ENCODE measurements at regions of chr16 and their contacts with region 1.

Region 1: DNA sequence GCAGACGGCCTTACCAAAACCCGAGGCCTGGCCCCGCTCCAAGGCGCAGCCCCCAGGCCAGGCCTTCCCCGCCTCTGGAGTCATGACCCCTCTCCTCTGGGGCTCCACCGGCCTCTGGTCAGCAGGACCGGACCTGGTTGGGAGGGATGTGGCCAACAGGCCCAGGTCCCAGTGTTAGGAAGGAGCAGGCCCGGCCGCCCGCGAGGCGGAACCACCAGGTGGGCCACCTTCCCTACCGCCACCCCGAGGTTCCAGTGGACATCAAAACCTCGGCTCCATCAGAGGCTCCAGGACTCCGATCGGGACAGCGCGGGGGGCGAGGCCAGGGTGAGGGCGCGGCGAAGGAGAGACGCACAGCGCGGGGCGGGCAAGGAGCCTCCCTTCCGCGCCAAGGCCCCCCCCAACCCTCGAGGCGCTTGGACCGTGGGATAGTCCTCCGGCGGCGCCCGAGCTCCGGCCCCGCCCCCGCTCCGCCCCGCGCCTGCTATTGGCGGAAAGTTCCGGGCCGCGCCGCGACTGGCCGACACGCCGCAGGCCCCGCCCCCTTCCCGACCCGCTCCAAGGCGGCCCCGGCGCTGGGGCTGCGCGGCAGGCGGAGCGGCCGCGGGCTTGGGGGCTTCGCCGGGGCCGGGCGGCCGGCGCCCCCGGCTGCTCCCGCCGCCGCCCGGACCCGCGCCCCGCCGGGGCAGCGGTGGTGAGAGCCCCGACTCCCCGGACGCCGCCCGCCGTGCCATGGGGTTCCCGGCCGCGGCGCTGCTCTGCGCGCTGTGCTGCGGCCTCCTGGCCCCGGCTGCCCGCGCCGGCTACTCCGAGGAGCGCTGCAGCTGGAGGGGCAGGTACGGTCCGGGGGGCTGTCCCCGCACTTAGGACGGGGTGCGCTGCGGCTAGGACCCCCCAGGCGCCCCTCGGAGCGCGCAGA is at the start of gene METRN:
- DNase-seq: peak; percentile 95
- ATAC-seq: peak; percentile 85
- H3K4me3 Mint-ChIP-seq: peak within 1 kb of the TSS; percentile 56
- H3K27ac Mint-ChIP-seq: no peak within 1 kb of the TSS
- H3K4me1 Mint-ChIP-seq: peaks cover 8% of the 10 kb centered on the region
- H3K27me3 Mint-ChIP-seq: peaks cover 14% of the 10 kb centered on the region
- total RNA-seq, gene METRN: 11.1 to 13.3 TPM

Region 2: DNA sequence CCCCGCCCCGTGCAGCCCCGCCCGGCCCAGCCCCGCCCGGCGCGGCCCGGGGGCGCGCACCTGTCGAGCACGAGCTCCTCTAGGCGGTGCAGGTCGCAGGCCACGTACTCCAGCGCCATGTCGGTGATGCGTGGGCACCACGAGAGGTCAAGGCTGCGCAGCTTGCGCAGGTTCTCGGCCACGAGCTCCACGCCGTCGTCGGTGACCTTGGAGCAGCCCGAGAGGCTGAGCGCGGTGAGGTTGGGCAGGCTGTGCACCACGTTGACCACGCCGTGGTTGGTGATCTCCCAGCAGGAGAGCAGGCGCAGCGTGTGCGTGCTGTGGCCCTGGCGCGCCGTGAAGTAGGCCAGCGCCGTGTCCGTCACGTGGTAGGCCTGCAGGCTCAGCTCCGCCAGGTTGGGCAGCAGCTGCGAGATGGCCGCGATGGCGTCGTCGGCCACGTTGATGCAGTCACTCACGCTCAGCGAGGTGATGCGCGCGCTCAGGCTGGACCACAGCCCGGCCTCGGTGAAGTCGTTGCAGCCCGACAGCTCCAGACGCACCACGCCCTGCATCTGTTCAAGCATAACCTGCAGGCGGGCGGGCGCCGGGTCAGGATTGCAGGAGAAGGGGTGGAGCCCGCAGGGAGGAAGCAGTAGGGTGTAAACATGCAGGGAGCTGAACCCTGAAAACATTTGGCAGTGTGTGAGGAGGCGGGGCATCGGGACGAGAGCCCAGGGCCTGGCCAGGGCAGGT is 19.3 kb before region 1 on chr16:
- CTCF ChIA-PET with region 1: interaction called, 11 read pairs
- POLR2A ChIA-PET with region 1: no interaction called
- intact Hi-C with region 1: loop called in 1 of 2 experiments (anchors 1 kb)
- DNase-seq: peak; percentile 89
- ATAC-seq: peak; percentile 82
- H3K4me3 Mint-ChIP-seq: peak overlapping the region; percentile 77
- H3K27ac Mint-ChIP-seq: peak overlapping the region; percentile 80
- H3K4me1 Mint-ChIP-seq: peaks cover 13% of the 10 kb centered on the region
- H3K27me3 Mint-ChIP-seq: no peaks in the 10 kb centered on the region

Region 3: DNA sequence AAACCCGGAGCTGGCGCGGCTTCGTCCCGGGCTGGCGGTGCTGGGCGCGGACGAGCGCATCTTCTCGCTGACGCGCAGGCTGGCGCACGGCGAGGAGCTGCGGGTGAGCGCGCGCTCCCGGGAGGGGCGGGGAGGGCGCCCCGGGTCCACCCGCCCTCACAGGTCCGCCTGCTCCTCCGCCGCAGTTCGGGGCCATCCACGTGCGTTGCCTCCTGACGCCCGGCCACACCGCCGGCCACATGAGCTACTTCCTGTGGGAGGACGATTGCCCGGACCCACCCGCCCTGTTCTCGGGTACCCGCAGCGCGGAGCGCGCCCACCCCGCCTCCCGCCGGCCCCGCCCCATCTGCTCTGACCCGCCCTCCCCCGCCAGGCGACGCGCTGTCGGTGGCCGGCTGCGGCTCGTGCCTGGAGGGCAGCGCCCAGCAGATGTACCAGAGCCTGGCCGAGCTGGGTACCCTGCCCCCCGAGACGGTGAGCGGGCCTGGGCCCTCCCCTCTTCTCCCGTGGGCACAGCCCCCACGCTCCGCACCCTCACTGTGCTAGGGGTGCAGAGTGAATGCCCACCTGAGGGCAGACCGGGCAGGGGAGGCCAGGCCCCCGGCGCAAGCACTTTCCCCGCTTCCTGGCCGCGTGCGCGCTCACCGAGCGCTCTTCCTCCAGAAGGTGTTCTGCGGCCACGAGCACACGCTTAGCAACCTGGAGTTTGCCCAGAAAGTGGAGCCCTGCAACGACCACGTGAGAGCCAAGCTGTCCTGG is 13.5 kb after region 1 on chr16:
- CTCF ChIA-PET with region 1: interaction called, 7 read pairs
- POLR2A ChIA-PET with region 1: interaction called, 4 read pairs
- intact Hi-C with region 1: loop called in 1 of 2 experiments (anchors 1 kb)
- DNase-seq: peak; percentile 74
- ATAC-seq: peak; percentile 70
- H3K4me3 Mint-ChIP-seq: peak overlapping the region; percentile 44
- H3K27ac Mint-ChIP-seq: no peak overlapping the region
- H3K4me1 Mint-ChIP-seq: peaks cover 3% of the 10 kb centered on the region
- H3K27me3 Mint-ChIP-seq: no peaks in the 10 kb centered on the region

Region 4: GRCh38 chr16:740764-741505 is 26.1 kb after region 1 on chr16 and contains the start of gene CIAO3:
- CTCF ChIA-PET with region 1: interaction called, 15 read pairs
- POLR2A ChIA-PET with region 1: interaction called, 4 read pairs
- intact Hi-C with region 1: loop called (anchors 1 to 2 kb)
- DNase-seq: peak; percentile 96
- ATAC-seq: peak; percentile 72
- H3K4me3 Mint-ChIP-seq: peak within 1 kb of the TSS; percentile 76
- H3K27ac Mint-ChIP-seq: peak within 1 kb of the TSS; percentile 51
- H3K4me1 Mint-ChIP-seq: peaks cover 22% of the 10 kb centered on the region
- H3K27me3 Mint-ChIP-seq: no peaks in the 10 kb centered on the region
- total RNA-seq, gene CIAO3: 28.3 to 31.9 TPM

Region 5: GRCh38 chr16:842711-843560 is 128.1 kb after region 1 on chr16:
- CTCF ChIA-PET with region 1: no interaction called
- POLR2A ChIA-PET with region 1: no interaction called
- intact Hi-C with region 1: no loop called
- DNase-seq: no peak
- ATAC-seq: no peak
- H3K4me3 Mint-ChIP-seq: no peak overlapping the region
- H3K27ac Mint-ChIP-seq: no peak overlapping the region
- H3K4me1 Mint-ChIP-seq: no peaks in the 10 kb centered on the region
- H3K27me3 Mint-ChIP-seq: no peaks in the 10 kb centered on the region

Region 6: GRCh38 chr16:877991-878784 is 163.4 kb after region 1 on chr16:
- CTCF ChIA-PET with region 1: no interaction called
- POLR2A ChIA-PET with region 1: no interaction called
- intact Hi-C with region 1: no loop called
- DNase-seq: peak; percentile 45
- ATAC-seq: peak; percentile 12
- H3K4me3 Mint-ChIP-seq: no peak overlapping the region
- H3K27ac Mint-ChIP-seq: no peak overlapping the region
- H3K4me1 Mint-ChIP-seq: no peaks in the 10 kb centered on the region
- H3K27me3 Mint-ChIP-seq: no peaks in the 10 kb centered on the region

Region 7: DNA sequence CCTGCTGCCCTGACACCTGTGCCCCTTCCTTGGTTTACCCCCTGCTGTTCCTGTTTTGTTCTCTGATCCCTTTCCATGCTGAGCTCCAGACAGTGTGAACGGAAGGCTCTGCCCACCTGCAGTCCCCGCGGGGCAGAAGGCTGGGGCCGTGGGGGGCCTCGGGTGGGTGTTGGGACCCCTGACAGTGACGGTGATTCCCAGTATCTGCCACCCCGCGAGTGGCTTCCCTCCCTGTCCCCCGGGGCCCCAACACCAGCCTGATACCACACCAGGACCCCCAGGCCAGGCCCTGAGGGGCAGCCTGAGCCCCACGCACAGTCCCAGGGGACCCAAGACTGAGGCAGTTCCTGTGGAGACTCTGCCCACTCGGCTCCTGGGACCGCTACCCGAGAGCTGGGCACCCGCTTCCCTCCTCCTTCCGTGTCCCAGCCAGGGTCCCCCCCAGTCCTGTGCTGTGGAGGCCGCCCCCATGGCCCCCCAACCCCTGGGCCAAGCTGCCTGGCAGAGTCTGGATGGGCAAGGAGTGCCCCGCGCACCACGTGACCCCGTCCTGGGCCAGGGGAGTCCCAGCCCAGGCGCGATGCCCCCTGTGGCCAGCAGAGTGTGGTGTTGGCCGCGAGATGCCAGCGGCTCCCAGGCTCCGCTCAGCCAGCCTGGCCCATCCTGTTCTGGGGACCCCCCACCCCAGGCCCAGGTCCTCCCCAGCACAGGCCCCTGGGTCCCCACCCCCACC is 391.2 kb after region 1 on chr16:
- CTCF ChIA-PET with region 1: interaction called, 3 read pairs
- POLR2A ChIA-PET with region 1: no interaction called
- intact Hi-C with region 1: loop called in 1 of 2 experiments (anchors 2 kb)
- DNase-seq: peak; percentile 74
- ATAC-seq: peak; percentile 82
- H3K4me3 Mint-ChIP-seq: no peak overlapping the region
- H3K27ac Mint-ChIP-seq: no peak overlapping the region
- H3K4me1 Mint-ChIP-seq: no peaks in the 10 kb centered on the region
- H3K27me3 Mint-ChIP-seq: peaks cover 10% of the 10 kb centered on the region